Stomach (tissue), 19 donors: ENCODE measurements at regions of chr1 and their contacts with region 1.

Region 1: DNA sequence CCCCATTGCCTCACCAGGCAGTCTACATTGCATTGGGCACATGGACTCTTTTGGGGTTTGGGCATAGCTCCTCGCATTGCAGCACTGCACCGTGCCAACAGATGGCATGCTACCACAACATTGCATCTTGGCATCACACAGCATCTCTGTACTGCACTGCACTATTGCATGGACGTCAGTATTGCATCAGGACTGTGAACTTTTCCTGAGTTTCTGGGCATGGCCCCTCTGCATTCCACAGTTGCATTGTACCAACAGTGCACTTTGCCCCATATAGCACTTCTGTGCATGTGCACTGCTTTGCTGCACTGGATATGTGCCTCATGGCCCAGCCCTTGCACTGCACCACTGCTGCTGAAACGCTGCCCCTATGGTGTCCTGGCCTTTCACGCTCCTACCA is 9.6 kb downstream of the PTPRU start:
- DNase-seq: peak in 1 of 2 donors; percentile 67
- H3K4me3 ChIP-seq: no peak overlapping the region
- H3K27ac ChIP-seq: no peak overlapping the region
- H3K4me1 ChIP-seq: peaks cover 0 to 9% (median 3%) of the 10 kb centered on the region in 4 donors
- H3K27me3 ChIP-seq: no peaks in the 10 kb centered on the region
- CTCF ChIP-seq: peak in 4 of 7 experiments; percentile 15 to 25 (median 19)
- EP300 ChIP-seq: no peak
- POLR2A ChIP-seq: no peak

Region 2: DNA sequence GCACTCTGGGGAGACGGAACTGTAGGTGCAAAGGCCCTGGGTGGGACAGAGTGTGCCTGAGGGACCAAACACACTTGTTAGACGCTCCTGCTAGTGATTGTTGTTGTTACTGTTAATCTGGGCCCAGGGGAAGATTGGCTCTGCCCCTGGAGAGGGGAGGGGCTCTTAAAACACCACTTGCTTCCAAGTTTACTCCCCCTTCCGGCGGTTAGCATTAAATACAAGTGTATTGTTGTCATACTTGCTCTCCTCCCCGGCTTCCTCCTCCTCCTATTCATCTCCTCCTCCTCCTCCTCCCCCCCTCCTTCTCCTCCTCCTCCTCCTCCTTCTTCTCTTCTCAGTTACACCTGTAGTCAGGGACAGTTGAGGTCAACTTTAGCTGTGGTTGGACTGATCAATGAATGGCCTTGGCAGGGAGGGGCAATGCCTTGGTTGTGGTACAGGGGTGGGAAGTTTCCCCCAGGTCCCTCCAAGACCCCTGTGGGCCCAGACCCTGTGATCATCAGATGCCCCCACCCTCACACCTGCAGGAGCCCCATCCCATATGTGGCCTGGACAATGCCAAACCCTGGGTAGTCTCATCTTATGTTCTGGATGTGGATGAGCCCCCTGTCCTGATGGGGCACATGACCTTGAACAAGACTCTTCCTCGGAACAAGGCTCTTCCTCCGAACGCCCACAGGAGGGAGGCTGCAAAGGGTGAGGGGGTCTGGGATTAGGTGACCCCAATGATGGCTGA is 207.8 kb after region 1 on chr1:
- intact Hi-C with region 1: loop called (anchors 10 kb)
- DNase-seq: peak in 1 of 2 donors; percentile 58
- H3K4me3 ChIP-seq: no peak overlapping the region
- H3K27ac ChIP-seq: no peak overlapping the region
- H3K4me1 ChIP-seq: no peaks in the 10 kb centered on the region
- H3K27me3 ChIP-seq: peaks cover 0 to 45% (median 0%) of the 10 kb centered on the region in 3 donors
- CTCF ChIP-seq: no peak
- EP300 ChIP-seq: no peak
- POLR2A ChIP-seq: no peak